Caco-2 (cell line): ENCODE measurements at regions of chr6 and their contacts with region 1.

Region 1: GRCh38 chr6:27902335-27903314 is 9.6 kb downstream of the OR2B2 start:
- DNase-seq: peak; percentile 73 to 87
- H3K4me3 ChIP-seq: peak overlapping the region; percentile 41
- H3K4me3 Mint-ChIP-seq: peak overlapping the region; percentile 76
- H3K27ac Mint-ChIP-seq: peak overlapping the region; percentile 96
- H3K4me1 ChIP-seq: peaks cover 14% of the 10 kb centered on the region
- H3K4me1 Mint-ChIP-seq: peaks cover 9% of the 10 kb centered on the region
- H3K27me3 ChIP-seq: no peaks in the 10 kb centered on the region
- H3K27me3 Mint-ChIP-seq: peaks cover 10% of the 10 kb centered on the region
- CTCF ChIP-seq: no peak

Region 2: DNA sequence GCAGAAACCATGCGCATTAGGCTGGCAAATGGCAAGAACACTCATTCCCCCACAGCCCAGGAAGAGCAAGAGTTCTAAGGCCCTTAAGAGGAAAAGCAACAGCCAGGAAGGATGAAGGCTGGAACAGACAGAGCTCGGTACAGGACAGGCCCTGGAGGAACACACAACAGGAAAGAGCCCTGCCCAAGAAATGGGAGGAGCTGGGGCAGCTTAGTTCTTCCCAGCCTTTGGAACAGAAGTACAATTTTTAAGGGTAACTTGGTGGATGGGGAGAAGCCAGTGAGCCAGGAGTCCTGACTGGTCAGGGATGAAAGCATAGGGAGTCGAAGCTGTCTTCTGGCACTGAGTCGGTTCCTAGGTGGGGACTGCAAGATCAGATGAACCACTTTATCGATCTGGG is 22.8 kb before region 1 on chr6:
- CTCF ChIA-PET with region 1: no interaction called
- POLR2A ChIA-PET with region 1: no interaction called
- intact Hi-C with region 1: no loop called
- DNase-seq: no peak
- H3K4me3 ChIP-seq: no peak overlapping the region
- H3K4me3 Mint-ChIP-seq: no peak overlapping the region
- H3K27ac Mint-ChIP-seq: no peak overlapping the region
- H3K4me1 ChIP-seq: no peaks in the 10 kb centered on the region; the same call in 1 of the 2 replicates
- H3K4me1 Mint-ChIP-seq: no peaks in the 10 kb centered on the region
- H3K27me3 ChIP-seq: no peaks in the 10 kb centered on the region
- H3K27me3 Mint-ChIP-seq: no peaks in the 10 kb centered on the region
- CTCF ChIP-seq: no peak

Region 3: GRCh38 chr6:27940766-27941165 is 38.1 kb after region 1 on chr6:
- CTCF ChIA-PET with region 1: no interaction called
- POLR2A ChIA-PET with region 1: no interaction called
- intact Hi-C with region 1: no loop called
- DNase-seq: no peak
- H3K4me3 ChIP-seq: no peak overlapping the region
- H3K4me3 Mint-ChIP-seq: no peak overlapping the region
- H3K27ac Mint-ChIP-seq: no peak overlapping the region
- H3K4me1 ChIP-seq: no peaks in the 10 kb centered on the region
- H3K4me1 Mint-ChIP-seq: no peaks in the 10 kb centered on the region
- H3K27me3 ChIP-seq: no peaks in the 10 kb centered on the region
- H3K27me3 Mint-ChIP-seq: peaks cover 15% of the 10 kb centered on the region
- CTCF ChIP-seq: no peak

Region 4: DNA sequence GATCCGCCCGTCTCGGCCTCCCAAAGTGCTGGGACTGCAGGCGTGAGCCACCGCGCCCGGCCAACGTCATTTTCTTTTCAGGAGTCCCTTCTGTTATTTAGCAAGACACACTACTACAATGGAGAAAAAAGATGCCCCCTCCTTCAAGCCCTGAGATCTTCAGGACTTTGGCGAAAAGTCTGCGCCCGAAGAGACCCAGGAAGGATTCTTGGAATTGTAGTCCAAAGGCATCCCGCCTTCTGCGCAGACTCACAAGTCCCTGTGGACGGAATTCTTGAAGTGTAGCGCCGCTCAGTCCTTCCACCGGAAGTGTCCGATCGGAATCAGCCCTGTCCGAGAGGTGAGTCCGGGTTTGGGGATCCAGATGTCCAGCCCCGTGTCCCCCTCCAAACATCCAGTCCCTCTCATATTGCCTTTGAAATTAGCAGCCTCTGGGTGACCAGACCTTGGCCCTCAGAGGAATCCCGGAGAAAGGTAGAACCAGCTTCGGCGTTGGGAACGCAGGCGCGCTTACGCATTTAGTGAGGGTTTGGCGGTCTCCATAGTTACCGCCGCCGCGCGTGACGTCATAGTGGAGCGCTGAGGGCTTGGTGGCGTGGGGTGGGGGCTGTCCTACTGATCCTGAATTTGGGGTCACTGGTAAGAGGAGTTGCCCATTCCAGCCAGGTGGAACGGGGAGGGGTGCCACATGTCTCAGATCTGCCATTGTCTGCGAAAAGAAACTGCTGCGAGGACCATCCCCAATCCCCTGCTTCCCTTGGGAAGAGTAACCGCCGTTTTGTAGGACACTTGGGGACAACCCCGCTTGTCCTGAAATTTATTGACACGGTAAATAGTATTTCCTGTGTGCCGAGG is 178.2 kb after region 1 on chr6:
- CTCF ChIA-PET with region 1: no interaction called
- POLR2A ChIA-PET with region 1: no interaction called
- intact Hi-C with region 1: loop called (anchors 2 kb)
- DNase-seq: peak; percentile 92 to 93
- H3K4me3 ChIP-seq: peak overlapping the region; percentile 58
- H3K4me3 Mint-ChIP-seq: peak overlapping the region; percentile 74
- H3K27ac Mint-ChIP-seq: peak overlapping the region; percentile 92
- H3K4me1 ChIP-seq: peaks cover 3% of the 10 kb centered on the region; the same call in 1 of the 2 replicates
- H3K4me1 Mint-ChIP-seq: peaks cover 16% of the 10 kb centered on the region
- H3K27me3 ChIP-seq: no peaks in the 10 kb centered on the region
- H3K27me3 Mint-ChIP-seq: no peaks in the 10 kb centered on the region
- CTCF ChIP-seq: no peak

Region 5: GRCh38 chr6:28104392-28105244 is 202.0 kb after region 1 on chr6:
- CTCF ChIA-PET with region 1: no interaction called
- POLR2A ChIA-PET with region 1: no interaction called
- intact Hi-C with region 1: loop called (anchors 10 kb)
- DNase-seq: peak; percentile 81
- H3K4me3 ChIP-seq: peak overlapping the region; percentile 79
- H3K4me3 Mint-ChIP-seq: peak overlapping the region; percentile 79
- H3K27ac Mint-ChIP-seq: peak overlapping the region; percentile 29
- H3K4me1 ChIP-seq: no peaks in the 10 kb centered on the region
- H3K4me1 Mint-ChIP-seq: peaks cover 11% of the 10 kb centered on the region
- H3K27me3 ChIP-seq: no peaks in the 10 kb centered on the region
- H3K27me3 Mint-ChIP-seq: peaks cover 8% of the 10 kb centered on the region
- CTCF ChIP-seq: peak; percentile 68 to 70

Region 6: GRCh38 chr6:28212510-28213212 is 310.0 kb after region 1 on chr6:
- CTCF ChIA-PET with region 1: no interaction called
- POLR2A ChIA-PET with region 1: no interaction called
- intact Hi-C with region 1: no loop called
- DNase-seq: peak; percentile 66 to 69
- H3K4me3 ChIP-seq: peak overlapping the region; percentile 36
- H3K4me3 Mint-ChIP-seq: peak overlapping the region; percentile 86
- H3K27ac Mint-ChIP-seq: peak overlapping the region; percentile 84
- H3K4me1 ChIP-seq: peaks cover 6% of the 10 kb centered on the region; the same call in 1 of the 2 replicates
- H3K4me1 Mint-ChIP-seq: peaks cover 21% of the 10 kb centered on the region
- H3K27me3 ChIP-seq: no peaks in the 10 kb centered on the region
- H3K27me3 Mint-ChIP-seq: peaks cover 11% of the 10 kb centered on the region
- CTCF ChIP-seq: no peak